Mammary epithelial cell (primary cell): ENCODE measurements at regions of chr7 and their contacts with region 1.

Region 1: DNA sequence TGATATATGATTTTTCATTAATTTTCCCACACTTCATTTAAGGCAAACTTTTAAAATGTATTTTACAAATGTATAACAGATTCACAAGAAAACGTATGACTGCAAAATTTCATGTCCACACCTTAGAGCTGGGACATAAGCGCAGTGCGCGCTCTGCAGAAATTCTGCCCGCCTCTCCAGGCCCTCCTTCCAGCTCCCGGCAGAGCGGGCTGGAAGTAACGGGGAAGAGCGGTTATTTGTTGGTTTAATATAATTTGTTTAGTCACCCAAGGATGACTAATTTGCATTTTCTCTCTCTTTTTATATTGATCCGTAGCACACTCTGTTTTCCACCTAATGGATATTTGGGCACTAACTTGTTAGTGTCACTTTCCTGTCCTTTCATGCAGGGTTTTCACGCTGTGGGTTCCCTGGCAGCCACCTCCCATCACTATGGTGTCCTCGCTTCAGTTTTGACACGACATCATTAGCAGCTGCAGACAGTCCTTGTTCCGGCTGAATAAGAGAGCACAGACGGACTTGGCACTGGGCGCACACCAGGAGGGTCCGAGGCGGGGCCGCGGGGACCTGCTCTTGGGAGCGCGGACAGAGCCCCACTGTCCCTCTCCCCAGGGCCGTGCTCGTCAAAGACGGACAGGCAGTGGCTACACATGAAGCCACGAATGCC is 129.2 kb upstream of the SEC61G start:
- DNase-seq: no peak
- H3K4me3 ChIP-seq: peak overlapping the region; percentile 28 to 42 (median 41)
- H3K27ac ChIP-seq: no peak overlapping the region
- H3K4me1 ChIP-seq: peaks cover 6% of the 10 kb centered on the region
- H3K27me3 ChIP-seq: no peaks in the 10 kb centered on the region
- CTCF ChIP-seq: no peak

Region 2: GRCh38 chr7:54978364-54979118 is 90.3 kb after region 1 on chr7:
- CTCF ChIA-PET with region 1: no interaction called
- dilution Hi-C with region 1: no loop called
- in situ Hi-C with region 1: no loop called
- intact Hi-C with region 1: no loop called
- DNase-seq: no peak
- H3K4me3 ChIP-seq: no peak overlapping the region
- H3K27ac ChIP-seq: no peak overlapping the region
- H3K4me1 ChIP-seq: no peaks in the 10 kb centered on the region
- H3K27me3 ChIP-seq: no peaks in the 10 kb centered on the region
- CTCF ChIP-seq: no peak

Region 3: GRCh38 chr7:54995631-54996340 is 107.6 kb after region 1 on chr7:
- CTCF ChIA-PET with region 1: interaction called, 15 read pairs
- dilution Hi-C with region 1: no loop called
- in situ Hi-C with region 1: no loop called
- intact Hi-C with region 1: no loop called
- DNase-seq: peak; percentile 92
- H3K4me3 ChIP-seq: peak overlapping the region in 1 of 3 experiments; percentile 4
- H3K27ac ChIP-seq: peak overlapping the region; percentile 88
- H3K4me1 ChIP-seq: peaks cover 31% of the 10 kb centered on the region
- H3K27me3 ChIP-seq: no peaks in the 10 kb centered on the region
- CTCF ChIP-seq: no peak